Heart left ventricle (tissue), 16 donors: ENCODE measurements at regions of chr2 and their contacts with region 1.

Region 1: GRCh38 chr2:112606488-112606902 is 22.1 kb downstream of the CHCHD5 start:
- DNase-seq: no peak
- ATAC-seq: no peak
- H3K4me3 ChIP-seq: no peak overlapping the region
- H3K27ac ChIP-seq: no peak overlapping the region
- H3K4me1 ChIP-seq: no peaks in the 10 kb centered on the region
- H3K27me3 ChIP-seq: no peaks in the 10 kb centered on the region
- CTCF ChIP-seq: no peak
- POLR2A ChIP-seq: no peak

Region 2: GRCh38 chr2:112204411-112204810 is 402.1 kb before region 1 on chr2:
- intact Hi-C with region 1: no loop called
- DNase-seq: no peak
- ATAC-seq: no peak
- H3K4me3 ChIP-seq: no peak overlapping the region
- H3K27ac ChIP-seq: no peak overlapping the region
- H3K4me1 ChIP-seq: no peaks in the 10 kb centered on the region
- H3K27me3 ChIP-seq: no peaks in the 10 kb centered on the region
- CTCF ChIP-seq: no peak
- POLR2A ChIP-seq: no peak

Region 3: DNA sequence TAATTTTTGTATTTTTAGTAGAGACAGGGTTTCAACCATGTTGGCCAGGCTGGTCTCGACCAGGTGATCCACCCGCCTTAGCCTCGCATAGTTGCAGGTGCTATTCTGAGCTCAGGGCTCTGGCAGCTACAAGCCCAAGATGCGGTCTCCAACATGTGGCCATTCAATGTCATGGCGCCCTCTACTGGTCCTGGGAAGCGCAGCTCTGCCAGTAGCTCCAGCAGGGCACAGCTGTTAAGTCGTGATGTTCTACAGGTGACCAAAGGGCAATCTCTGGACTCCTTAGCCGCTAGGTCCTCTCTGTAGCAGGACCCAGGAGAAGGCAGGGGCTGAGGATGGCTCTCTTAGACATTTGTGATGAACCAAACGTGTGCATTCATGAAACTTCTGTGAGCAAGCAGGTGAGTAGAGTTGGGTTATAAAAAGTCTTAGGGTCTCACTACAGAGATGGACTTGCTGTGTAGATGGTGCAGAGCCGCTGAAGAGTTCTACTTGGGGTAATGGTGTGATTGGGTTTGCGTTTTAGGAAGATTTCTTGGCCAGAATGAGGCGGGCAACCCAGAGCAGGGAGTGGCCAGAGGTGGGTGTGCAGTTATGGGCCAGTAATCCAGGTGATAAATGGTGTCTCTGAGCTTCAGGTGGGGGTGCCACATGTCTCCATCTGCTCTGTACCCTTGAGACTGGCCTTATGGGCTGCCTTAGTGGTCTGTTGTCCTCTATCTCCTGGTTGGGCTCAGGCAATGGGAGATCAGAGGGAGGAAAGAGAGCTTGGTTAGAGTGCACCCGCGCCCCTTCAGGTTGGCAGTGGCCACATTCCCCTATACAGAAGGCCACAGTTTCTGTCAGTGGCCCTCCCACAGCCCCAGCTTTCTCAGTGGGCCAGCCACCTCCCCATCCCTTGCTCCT is 335.5 kb after region 1 on chr2:
- intact Hi-C with region 1: loop called in 2 of 10 experiments (anchors 10 kb)
- DNase-seq: peak; percentile 37 to 76 (median 49)
- ATAC-seq: peak in 3 of 4 donors; percentile 72 to 85 (median 74)
- H3K4me3 ChIP-seq: no peak overlapping the region
- H3K27ac ChIP-seq: no peak overlapping the region
- H3K4me1 ChIP-seq: no peaks in the 10 kb centered on the region
- H3K27me3 ChIP-seq: peaks cover 0 to 18% (median 0%) of the 10 kb centered on the region in 9 donors
- CTCF ChIP-seq: peak; percentile 52 to 76 (median 64)
- POLR2A ChIP-seq: no peak

Region 4: GRCh38 chr2:113273027-113273551 is 666.6 kb after region 1 on chr2:
- intact Hi-C with region 1: no loop called
- DNase-seq: no peak
- ATAC-seq: no peak
- H3K4me3 ChIP-seq: no peak overlapping the region
- H3K27ac ChIP-seq: no peak overlapping the region
- H3K4me1 ChIP-seq: peaks cover 0 to 26% (median 9%) of the 10 kb centered on the region in 12 donors
- H3K27me3 ChIP-seq: peaks cover 20 to 99% (median 73%) of the 10 kb centered on the region in 9 donors
- CTCF ChIP-seq: no peak
- POLR2A ChIP-seq: no peak